ENCODE measurements at regions of chr12 and their contacts with region 1.

Region 1: GRCh38 chr12:53701518-53702260 is 25.6 kb downstream of the CALCOCO1 start:
- DNase-seq: peak; percentile 20
- ATAC-seq: peak; percentile 99
- H3K4me3 ChIP-seq: no peak overlapping the region
- H3K27ac ChIP-seq: no peak overlapping the region
- H3K4me1 ChIP-seq: no peaks in the 10 kb centered on the region
- H3K27me3 ChIP-seq: peaks cover 8 to 29% of the 10 kb centered on the region in 2 experiments
- CTCF ChIP-seq: peak; percentile 96 to 99 (median 98); a peak in 5 of 6 replicates
- EP300 ChIP-seq: no peak
- POLR2A ChIP-seq: no peak
- RAD21 ChIP-seq: peak; percentile 92

Region 2: DNA sequence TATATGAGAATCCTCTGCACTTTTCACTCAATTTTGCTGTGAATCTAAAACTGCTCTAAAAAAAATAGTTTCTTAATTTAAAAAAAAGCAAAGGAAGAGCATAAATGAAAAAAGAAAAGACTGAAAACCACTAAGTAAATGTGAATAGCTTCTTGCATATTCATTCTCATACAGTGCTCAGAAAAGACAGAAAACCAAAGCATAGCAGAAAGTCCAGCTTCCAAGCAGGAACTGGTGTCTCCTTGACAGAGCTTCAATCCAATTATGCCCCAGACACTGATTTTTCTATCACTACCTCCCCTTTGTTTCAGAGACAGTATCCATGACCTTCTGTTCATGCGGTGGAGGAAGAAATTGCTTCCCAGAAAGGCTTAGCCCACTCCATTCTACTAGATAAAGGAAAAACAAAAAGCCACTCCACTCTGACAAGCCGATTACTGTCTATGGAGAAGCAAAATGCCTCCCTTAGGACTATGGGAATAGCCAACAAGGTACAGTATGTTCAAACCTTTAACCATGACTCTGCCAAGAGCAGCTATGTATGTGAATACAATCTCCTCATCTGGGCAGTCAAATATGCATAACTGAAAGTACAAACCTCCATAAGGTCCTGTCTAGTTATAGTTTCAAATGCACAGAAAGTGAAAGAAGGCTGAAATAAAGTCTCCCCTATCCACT is 116.1 kb before region 1 on chr12:
- CTCF ChIA-PET with region 1: no interaction called
- POLR2A ChIA-PET with region 1: no interaction called
- RAD21 ChIA-PET with region 1: no interaction called
- SMC1A ChIA-PET with region 1: no interaction called
- in situ Hi-C with region 1: no loop called
- intact Hi-C with region 1: no loop called
- DNase-seq: no peak
- ATAC-seq: peak; percentile 96
- H3K4me3 ChIP-seq: peak overlapping the region; percentile 40; the same call in 1 of the 2 replicates
- H3K27ac ChIP-seq: peak overlapping the region; percentile 54; the same call in 1 of the 2 replicates
- H3K4me1 ChIP-seq: peaks cover 13% of the 10 kb centered on the region
- H3K27me3 ChIP-seq: no peaks in the 10 kb centered on the region
- CTCF ChIP-seq: no peak
- EP300 ChIP-seq: no peak
- POLR2A ChIP-seq: no peak
- RAD21 ChIP-seq: no peak

Region 3: DNA sequence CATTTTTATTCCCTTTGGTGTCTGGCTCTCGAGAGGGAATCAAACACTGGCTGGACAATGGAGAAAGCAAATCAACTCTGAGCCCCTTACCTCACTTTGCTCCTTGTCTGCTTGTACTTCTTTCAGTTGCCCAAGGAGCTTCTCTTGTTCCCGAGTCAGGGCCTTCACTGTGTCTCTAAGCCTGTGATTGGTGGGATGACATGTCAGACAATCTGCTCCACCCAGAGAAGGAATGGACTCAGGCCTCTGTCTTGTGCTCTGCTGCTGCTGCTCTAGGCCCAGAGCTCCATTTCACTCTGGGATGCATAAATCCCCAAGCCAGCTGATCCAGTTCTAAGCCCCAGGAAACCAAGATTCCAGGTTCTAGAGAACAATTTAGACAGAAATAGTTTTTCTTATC is 18.0 kb after region 1 on chr12:
- CTCF ChIA-PET with region 1: interaction called, 14 read pairs
- POLR2A ChIA-PET with region 1: no interaction called
- RAD21 ChIA-PET with region 1: interaction called, 4 read pairs
- SMC1A ChIA-PET with region 1: interaction called, 3 read pairs
- in situ Hi-C with region 1: no loop called
- intact Hi-C with region 1: no loop called
- DNase-seq: no peak
- ATAC-seq: no peak
- H3K4me3 ChIP-seq: no peak overlapping the region
- H3K27ac ChIP-seq: no peak overlapping the region
- H3K4me1 ChIP-seq: peaks cover 14% of the 10 kb centered on the region
- H3K27me3 ChIP-seq: no peaks in the 10 kb centered on the region
- CTCF ChIP-seq: no peak
- EP300 ChIP-seq: no peak
- POLR2A ChIP-seq: no peak
- RAD21 ChIP-seq: no peak

Region 4: GRCh38 chr12:53727310-53728041 is 25.8 kb after region 1 on chr12 and contains the start of gene CALCOCO1:
- CTCF ChIA-PET with region 1: interaction called, 36 read pairs
- POLR2A ChIA-PET with region 1: no interaction called
- RAD21 ChIA-PET with region 1: interaction called, 6 read pairs
- SMC1A ChIA-PET with region 1: interaction called, 4 read pairs
- in situ Hi-C with region 1: no loop called
- intact Hi-C with region 1: no loop called
- DNase-seq: peak; percentile 95
- ATAC-seq: peak; percentile 99
- H3K4me3 ChIP-seq: peak within 1 kb of the TSS; percentile 74
- H3K27ac ChIP-seq: 0 out of 2 replicates have a peak within 1 kb of the TSS, but pooled peaks have one; percentile 24
- H3K4me1 ChIP-seq: peaks cover 17% of the 10 kb centered on the region
- H3K27me3 ChIP-seq: no peaks in the 10 kb centered on the region; a peak in 1 of 4 replicates
- CTCF ChIP-seq: no peak
- EP300 ChIP-seq: no peak; a peak in 2 of 4 replicates
- POLR2A ChIP-seq: peak; percentile 68
- RAD21 ChIP-seq: no peak
- polyA plus RNA-seq, gene CALCOCO1: 2.8 to 4.4 TPM